MCF 10A (cell line): ENCODE measurements at regions of chr3 and their contacts with region 1.

Region 1: GRCh38 chr3:160003520-160004128 is 15.0 kb downstream of the IL12A start:
- DNase-seq: peak; percentile 66
- H3K4me3 Mint-ChIP-seq: no peak overlapping the region
- H3K27ac Mint-ChIP-seq: no peak overlapping the region
- H3K4me1 Mint-ChIP-seq: peaks cover 6% of the 10 kb centered on the region
- H3K27me3 Mint-ChIP-seq: no peaks in the 10 kb centered on the region
- CTCF ChIP-seq: peak; percentile 69

Region 2: GRCh38 chr3:159260049-159260662 is 743.5 kb before region 1 on chr3:
- CTCF ChIA-PET with region 1: interaction called, 34 read pairs
- POLR2A ChIA-PET with region 1: interaction called, 3 read pairs
- intact Hi-C with region 1: loop called (anchors 1 kb)
- DNase-seq: peak; percentile 77
- H3K4me3 Mint-ChIP-seq: no peak overlapping the region
- H3K27ac Mint-ChIP-seq: no peak overlapping the region
- H3K4me1 Mint-ChIP-seq: no peaks in the 10 kb centered on the region
- H3K27me3 Mint-ChIP-seq: peaks cover 49% of the 10 kb centered on the region
- CTCF ChIP-seq: peak; percentile 81

Region 3: DNA sequence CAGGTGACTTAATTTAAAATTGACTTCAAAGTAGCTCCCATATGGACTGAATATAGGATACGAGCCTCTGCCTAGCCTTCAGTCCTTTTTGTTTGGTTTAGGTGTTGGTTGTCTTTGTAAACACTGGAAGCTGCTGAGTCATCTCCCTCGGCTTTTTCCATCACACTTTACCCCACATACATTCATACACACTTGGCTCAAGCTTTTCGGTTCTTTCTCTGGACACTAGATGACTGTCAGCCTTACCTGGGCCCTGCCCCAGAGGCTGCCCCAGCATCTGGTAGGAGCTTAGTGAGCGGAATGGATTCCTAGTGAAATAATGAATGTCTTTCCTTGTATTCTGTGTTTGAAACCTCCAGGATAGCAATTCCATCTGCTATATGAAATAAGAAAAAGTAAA is 216.4 kb before region 1 on chr3:
- CTCF ChIA-PET with region 1: interaction called, 18 read pairs
- POLR2A ChIA-PET with region 1: no interaction called
- intact Hi-C with region 1: no loop called
- DNase-seq: peak; percentile 94
- H3K4me3 Mint-ChIP-seq: peak overlapping the region; percentile 47
- H3K27ac Mint-ChIP-seq: peak overlapping the region; percentile 89
- H3K4me1 Mint-ChIP-seq: peaks cover 55% of the 10 kb centered on the region
- H3K27me3 Mint-ChIP-seq: no peaks in the 10 kb centered on the region
- CTCF ChIP-seq: no peak

Region 4: DNA sequence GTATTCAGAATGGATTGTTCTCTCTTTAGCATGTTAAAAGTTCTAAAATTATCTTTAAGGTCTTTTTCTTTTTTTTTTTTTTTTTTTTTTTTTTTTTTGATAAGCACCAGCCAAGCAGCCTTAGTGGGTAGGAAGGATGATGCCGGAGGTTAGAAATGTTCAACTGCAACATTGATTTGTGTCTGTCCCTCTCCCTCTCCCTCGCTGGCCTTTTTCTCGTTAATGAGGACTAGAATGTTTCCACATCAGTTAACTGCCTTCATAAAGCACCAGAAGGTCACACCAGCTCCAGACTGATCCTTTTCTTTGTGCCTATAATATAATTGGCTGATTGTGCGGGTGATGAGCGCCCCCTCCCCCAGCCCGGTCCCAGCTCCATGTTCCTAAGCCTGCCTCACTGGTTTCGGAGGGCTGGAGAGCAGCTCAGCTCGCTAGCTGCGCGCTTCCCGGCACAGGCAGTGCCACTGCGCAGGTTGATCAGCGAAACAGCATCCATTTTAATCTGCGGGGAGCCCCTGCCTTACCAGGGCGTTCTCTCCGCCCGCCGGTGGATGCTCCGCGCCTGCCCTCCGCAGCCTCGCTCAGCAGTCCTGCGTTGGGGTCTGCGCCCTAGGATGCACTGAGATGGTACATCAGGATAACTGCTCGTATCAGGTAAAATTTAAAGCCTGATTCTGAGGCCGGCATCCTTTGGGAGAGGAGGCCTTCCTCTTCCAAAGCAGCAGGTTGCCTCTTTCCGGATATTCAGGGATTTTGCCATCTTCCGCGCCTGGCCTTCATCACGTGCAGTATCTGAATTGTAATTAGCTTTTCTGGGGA is 163.9 kb before region 1 on chr3:
- CTCF ChIA-PET with region 1: interaction called, 18 read pairs
- POLR2A ChIA-PET with region 1: interaction called, 4 read pairs
- intact Hi-C with region 1: no loop called
- DNase-seq: no peak
- H3K4me3 Mint-ChIP-seq: peak within 1 kb of the TSS; percentile 66
- H3K27ac Mint-ChIP-seq: peak within 1 kb of the TSS; percentile 27
- H3K4me1 Mint-ChIP-seq: peaks cover 25% of the 10 kb centered on the region
- H3K27me3 Mint-ChIP-seq: no peaks in the 10 kb centered on the region
- CTCF ChIP-seq: no peak

Region 5: GRCh38 chr3:159884661-159885402 is 118.8 kb before region 1 on chr3:
- CTCF ChIA-PET with region 1: interaction called, 721 read pairs
- POLR2A ChIA-PET with region 1: interaction called, 48 read pairs
- intact Hi-C with region 1: loop called (anchors 1 kb)
- DNase-seq: peak; percentile 46
- H3K4me3 Mint-ChIP-seq: no peak overlapping the region
- H3K27ac Mint-ChIP-seq: peak overlapping the region; percentile 31
- H3K4me1 Mint-ChIP-seq: peaks cover 26% of the 10 kb centered on the region
- H3K27me3 Mint-ChIP-seq: no peaks in the 10 kb centered on the region
- CTCF ChIP-seq: peak; percentile 65

Region 6: DNA sequence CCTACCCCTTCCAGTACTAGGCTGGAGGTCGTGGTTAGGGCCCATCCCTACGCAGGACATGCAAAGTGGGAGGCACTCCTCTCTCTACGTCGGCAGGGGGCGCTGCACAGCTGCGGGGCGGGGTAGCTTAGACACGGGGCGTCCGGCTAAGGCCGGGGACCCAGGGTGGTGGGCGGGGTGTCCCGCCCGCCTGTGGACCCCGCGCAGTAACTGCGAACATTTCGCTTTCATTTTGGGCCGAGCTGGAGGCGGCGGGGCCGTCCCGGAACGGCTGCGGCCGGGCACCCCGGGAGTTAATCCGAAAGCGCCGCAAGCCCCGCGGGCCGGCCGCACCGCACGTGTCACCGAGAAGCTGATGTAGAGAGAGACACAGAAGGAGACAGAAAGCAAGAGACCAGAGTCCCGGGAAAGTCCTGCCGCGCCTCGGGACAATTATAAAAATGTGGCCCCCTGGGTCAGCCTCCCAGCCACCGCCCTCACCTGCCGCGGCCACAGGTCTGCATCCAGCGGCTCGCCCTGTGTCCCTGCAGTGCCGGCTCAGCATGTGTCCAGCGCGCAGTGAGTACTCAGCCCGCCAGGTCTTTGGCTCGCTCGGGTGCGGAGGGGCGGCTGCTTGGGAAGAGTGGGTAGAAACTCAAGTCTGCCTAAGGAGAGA is 14.9 kb before region 1 on chr3 and contains the start of gene IL12A:
- CTCF ChIA-PET with region 1: interaction called, 215 read pairs
- POLR2A ChIA-PET with region 1: interaction called, 4 read pairs
- intact Hi-C with region 1: no loop called
- DNase-seq: peak; percentile 78
- H3K4me3 Mint-ChIP-seq: peak within 1 kb of the TSS; percentile 75
- H3K27ac Mint-ChIP-seq: peak within 1 kb of the TSS; percentile 18
- H3K4me1 Mint-ChIP-seq: peaks cover 27% of the 10 kb centered on the region
- H3K27me3 Mint-ChIP-seq: no peaks in the 10 kb centered on the region
- CTCF ChIP-seq: peak; percentile 92
- total RNA-seq, gene IL12A: 1.3 and 1.7 TPM in 2 replicates

Region 7: DNA sequence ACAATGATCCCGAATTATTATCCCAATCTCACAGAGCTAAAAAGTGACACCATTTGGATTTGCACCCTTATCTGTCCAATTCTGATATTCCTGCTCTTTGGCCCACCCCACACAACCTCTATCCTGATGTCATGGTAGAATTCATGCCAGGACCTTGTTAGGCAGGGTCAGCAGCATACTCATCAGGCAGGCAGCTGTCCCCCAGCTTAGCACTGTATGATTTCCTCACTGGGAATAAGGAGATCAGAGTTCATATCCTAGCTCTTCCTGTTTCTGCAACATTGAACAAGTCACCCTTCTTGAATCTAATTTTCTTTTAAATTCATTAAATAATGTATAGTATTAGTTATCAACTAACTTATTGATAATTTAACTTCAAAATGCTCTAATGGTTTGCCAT is 209.6 kb after region 1 on chr3:
- CTCF ChIA-PET with region 1: no interaction called
- POLR2A ChIA-PET with region 1: no interaction called
- intact Hi-C with region 1: no loop called
- DNase-seq: no peak
- H3K4me3 Mint-ChIP-seq: no peak overlapping the region
- H3K27ac Mint-ChIP-seq: no peak overlapping the region
- H3K4me1 Mint-ChIP-seq: peaks cover 7% of the 10 kb centered on the region
- H3K27me3 Mint-ChIP-seq: no peaks in the 10 kb centered on the region
- CTCF ChIP-seq: no peak